ENCODE measurements at regions of chr20 and their contacts with region 1.

Region 1: DNA sequence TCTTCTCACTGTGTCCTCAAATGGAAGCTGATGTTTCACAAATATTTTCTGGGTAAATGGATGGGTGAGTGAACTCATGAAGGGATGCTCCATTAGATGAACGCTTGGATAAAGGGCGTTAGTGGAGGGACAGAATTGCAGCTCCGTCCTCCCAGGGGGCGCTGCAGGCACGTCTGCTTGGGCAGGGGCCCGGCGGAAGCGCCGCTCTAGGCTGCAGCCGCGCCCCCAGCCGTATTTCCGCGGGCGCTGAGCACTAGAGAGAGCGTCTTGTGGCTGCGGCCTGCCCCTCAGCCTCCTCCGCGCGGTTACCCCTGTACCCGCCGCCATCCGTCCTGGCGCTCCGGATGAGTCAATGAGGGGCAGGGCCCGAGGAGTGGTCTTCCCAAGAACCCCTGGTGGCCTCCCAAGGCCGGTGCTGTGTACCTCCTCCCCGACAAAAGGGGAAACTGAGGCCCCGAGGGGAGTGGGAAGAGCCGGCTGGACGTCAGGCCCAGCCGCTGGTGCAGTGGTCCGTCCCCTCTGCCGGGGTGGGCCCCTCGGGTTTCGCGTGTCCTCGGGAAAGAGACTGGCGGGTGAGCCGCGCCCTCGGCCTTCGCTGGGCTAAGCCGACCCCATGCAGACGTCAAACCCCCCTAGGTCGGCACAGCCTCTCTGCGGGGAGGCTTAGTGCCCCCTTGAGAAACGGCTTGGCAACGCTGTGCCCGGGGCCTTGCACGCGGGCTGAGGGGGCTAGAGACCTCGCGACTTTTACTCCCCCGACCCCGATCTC is 11.5 kb upstream of the SNHG17 start:
- DNase-seq: peak; percentile 97
- ATAC-seq: peak; percentile 96
- H3K4me3 Mint-ChIP-seq: peak overlapping the region; percentile 78
- H3K27ac Mint-ChIP-seq: peak overlapping the region; percentile 84
- H3K4me1 Mint-ChIP-seq: peaks cover 42% of the 10 kb centered on the region
- H3K27me3 Mint-ChIP-seq: no peaks in the 10 kb centered on the region
- CTCF ChIP-seq: peak; percentile 99

Region 2: DNA sequence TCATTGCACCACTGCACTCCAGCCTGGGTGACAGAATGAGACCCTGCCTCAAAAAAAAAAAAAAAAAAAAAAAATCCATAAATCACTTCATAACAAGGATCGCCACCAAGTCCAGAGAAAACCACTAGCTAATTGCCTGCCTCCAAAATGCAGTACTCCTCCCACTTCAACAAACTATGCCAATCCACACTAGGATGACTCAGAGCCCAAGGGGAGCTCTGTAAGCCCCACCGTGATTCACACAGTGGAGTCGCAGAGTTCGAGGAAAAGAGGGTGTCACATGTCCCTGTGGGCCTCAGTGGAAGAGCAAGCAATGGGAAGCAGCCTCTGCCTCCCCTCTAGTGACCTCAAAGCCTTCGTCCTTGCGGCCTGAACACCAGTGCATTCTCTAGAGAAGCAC is 20.6 kb before region 1 on chr20:
- CTCF ChIA-PET with region 1: interaction called, 4 read pairs
- POLR2A ChIA-PET with region 1: interaction called, 165 read pairs
- intact Hi-C with region 1: no loop called
- DNase-seq: peak; percentile 54
- ATAC-seq: peak; percentile 83
- H3K4me3 Mint-ChIP-seq: no peak overlapping the region
- H3K27ac Mint-ChIP-seq: peak overlapping the region; percentile 47
- H3K4me1 Mint-ChIP-seq: peaks cover 63% of the 10 kb centered on the region
- H3K27me3 Mint-ChIP-seq: no peaks in the 10 kb centered on the region
- CTCF ChIP-seq: no peak

Region 3: DNA sequence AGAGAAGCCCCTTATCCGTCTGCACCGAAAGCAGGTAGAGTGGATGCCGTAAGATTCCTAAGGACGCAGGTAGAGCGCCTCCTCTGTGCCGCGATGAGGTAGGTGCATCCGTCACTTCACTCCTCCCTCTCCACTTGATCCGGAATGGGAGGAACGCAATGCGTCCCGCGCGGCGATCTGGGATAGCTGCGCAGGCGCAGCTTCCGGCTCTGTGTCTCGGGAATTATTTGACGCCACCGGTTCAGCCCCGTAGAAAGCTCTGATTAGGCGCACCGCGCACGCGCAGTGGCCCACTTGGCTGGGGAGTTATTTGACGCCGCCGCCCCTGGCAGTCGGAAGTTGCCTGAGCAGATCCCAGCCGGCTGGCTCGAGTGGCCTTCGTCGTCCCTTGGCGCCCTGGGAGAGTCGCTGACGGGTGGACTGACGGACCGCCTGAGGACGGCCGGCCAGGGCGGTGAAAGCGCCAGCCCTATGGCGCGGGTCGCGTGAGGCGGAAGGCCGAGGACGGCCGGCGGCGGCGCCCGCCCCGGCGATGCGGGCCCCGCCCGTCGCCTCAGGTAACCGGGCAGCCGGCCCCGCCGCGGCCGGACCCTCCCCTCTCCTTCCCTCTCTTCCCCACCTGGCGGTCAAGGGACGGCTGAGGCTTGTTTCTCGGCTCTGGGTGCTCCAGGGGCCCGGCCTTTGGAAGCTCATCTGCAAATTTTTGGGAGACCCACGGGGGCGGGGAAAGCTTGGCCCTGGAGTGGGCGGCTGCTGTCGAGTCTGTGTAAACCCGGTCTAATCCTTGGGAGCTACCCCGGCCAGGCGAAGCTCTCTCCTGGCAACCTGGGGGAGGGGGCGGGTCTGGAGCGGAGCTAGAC is 26.1 kb after region 1 on chr20 and contains the start of gene RALGAPB:
- CTCF ChIA-PET with region 1: interaction called, 35 read pairs
- POLR2A ChIA-PET with region 1: interaction called, 23 read pairs
- intact Hi-C with region 1: no loop called
- DNase-seq: peak; percentile 98
- ATAC-seq: peak; percentile 97
- H3K4me3 Mint-ChIP-seq: peak within 1 kb of the TSS; percentile 80
- H3K27ac Mint-ChIP-seq: peak within 1 kb of the TSS; percentile 82
- H3K4me1 Mint-ChIP-seq: peaks cover 46% of the 10 kb centered on the region
- H3K27me3 Mint-ChIP-seq: no peaks in the 10 kb centered on the region
- CTCF ChIP-seq: peak; percentile 3
- total RNA-seq, gene RALGAPB: 19.8 to 21.3 TPM

Measured in activated CD8-positive, alpha-beta T cell treated with anti-CD3 and anti-CD28 coated beads for 36 hours (primary cell).